ENCODE measurements at regions of chr1 and their contacts with region 1.

Region 1: DNA sequence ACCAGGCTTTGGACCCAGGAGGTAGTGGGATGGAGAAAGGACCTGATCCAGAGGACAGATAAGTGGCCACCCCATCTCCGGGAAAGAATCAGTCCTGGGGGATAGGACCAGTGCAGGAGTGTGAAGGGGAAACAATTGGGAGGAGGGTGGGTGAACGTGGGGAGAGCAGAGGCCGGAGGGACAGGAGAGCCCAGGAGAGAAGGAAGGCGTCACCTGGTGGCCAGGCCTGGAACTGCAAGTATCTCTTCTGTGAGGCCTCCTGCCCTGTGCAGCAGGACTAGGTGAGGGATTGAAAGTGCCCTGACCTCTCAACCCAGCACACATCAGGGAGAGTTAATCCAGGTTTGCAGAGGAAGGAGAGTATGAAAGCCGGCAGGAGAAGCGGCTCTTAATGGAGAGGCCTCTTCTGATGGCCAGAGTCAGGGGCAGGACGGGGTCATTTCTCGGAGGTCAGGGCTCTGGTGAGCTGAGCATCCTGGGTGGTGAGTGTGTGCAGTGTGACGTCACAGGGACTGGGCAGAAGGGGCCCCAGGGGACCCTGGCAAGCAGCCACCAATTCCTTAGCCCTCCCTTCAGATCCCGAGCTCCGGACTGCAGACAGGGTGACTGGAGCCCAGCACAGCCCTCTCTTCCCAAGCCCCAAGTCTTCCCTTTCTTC is 9.2 kb upstream of the LAD1 start:
- DNase-seq: peak; percentile 80 to 98
- H3K4me3 ChIP-seq: no peak overlapping the region
- H3K27ac ChIP-seq: no peak overlapping the region
- H3K4me1 ChIP-seq: peaks cover 0 to 5% (median 0%) of the 10 kb centered on the region in 4 experiments; a peak in 2 of 7 replicates
- H3K27me3 ChIP-seq: no peaks in the 10 kb centered on the region; a peak in 1 of 7 replicates
- CTCF ChIP-seq: peak; percentile 91 to 99 (median 99)
- EP300 ChIP-seq: no peak
- POLR2A ChIP-seq: no peak
- RAD21 ChIP-seq: peak; percentile 81 to 82

Region 2: DNA sequence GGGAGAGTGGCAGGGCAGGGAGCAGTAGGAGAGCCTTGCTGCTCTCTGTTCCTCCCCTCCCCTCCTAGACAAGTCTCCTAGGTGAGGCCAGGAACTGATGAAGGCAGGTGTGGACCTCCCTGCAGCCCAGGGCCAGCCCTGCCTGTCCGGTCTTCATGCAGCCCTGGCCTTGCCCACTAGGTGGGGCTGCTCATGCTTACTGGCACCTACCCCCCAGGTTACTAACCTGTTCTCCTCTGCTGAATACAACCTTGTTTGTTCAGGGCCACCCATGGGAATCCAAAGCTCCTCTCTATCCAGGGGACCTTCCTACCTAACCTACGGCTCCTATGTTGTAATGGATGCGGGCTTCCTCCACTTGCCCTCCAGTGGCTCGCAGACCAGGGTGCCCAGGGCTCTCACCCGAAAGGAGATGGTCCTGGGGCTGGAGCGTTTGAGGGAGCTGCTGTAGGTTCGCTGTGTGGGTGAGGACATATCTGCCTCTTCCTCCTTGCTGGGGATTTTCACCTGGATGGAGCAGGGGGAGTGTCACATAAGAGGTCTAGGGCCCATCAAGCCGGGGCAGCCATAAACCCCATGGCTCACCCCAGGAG is 22.9 kb before region 1 on chr1:
- CTCF ChIA-PET with region 1: interaction called, 371 read pairs
- POLR2A ChIA-PET with region 1: interaction called, 4 read pairs
- DNase-seq: peak; percentile 38 to 95
- H3K4me3 ChIP-seq: no peak overlapping the region
- H3K27ac ChIP-seq: no peak overlapping the region
- H3K4me1 ChIP-seq: peaks cover 0 to 2% (median 0%) of the 10 kb centered on the region in 4 experiments; a peak in 1 of 7 replicates
- H3K27me3 ChIP-seq: no peaks in the 10 kb centered on the region
- CTCF ChIP-seq: peak; percentile 92 to 99 (median 98)
- EP300 ChIP-seq: no peak
- POLR2A ChIP-seq: no peak
- RAD21 ChIP-seq: peak; percentile 74 to 84

Region 3: DNA sequence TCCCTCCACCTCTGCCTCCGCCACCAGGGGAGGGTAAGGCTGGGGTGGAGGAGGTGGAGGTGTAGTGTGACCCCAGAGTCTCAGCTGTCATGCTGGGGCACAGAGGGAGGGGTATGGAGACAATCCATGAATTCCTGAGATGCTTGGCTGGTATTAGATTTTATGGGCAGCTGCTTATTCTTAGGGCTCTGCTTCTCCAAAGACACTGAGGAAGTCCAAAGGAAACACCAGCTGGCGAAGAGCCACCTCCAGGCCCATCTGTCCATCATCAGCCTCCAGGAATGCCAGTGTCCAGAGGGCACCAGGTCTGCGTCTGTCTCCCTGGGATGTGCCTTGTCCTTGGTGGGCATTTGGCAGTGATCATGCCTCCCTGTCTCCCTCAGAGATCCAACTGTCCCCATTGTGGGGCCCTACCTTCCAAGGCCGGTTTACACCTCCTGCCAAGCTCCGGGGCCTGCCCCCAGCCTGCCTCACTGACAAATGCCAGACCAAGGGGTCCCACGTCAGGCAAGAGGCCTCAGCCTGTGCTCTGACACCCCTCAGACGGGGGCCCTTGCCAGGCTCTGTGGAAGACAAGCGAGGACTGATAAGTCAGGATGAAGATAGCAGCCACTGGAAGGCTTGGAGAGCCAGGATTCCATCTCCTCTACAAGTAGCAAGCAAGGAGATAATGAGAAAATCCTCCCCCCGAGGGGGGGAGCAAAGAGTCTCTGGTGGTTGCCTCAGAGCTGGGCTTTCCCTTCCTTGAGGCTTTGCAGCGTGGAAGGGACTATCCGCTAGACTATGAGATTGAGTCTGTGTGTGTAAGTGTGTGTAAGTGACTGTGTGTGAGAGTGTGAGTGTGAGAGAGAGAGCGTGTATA is 11.7 kb after region 1 on chr1:
- CTCF ChIA-PET with region 1: interaction called, 60 read pairs
- POLR2A ChIA-PET with region 1: interaction called, 8 read pairs
- DNase-seq: no peak
- H3K4me3 ChIP-seq: no peak overlapping the region
- H3K27ac ChIP-seq: no peak overlapping the region
- H3K4me1 ChIP-seq: peaks cover 0 to 10% (median 0%) of the 10 kb centered on the region in 4 experiments; a peak in 1 of 7 replicates
- H3K27me3 ChIP-seq: 0 out of 7 replicates have a peak, but pooled peaks cover 0 to 2% (median 0%) of the 10 kb centered on the region in 4 experiments
- CTCF ChIP-seq: no peak
- EP300 ChIP-seq: no peak
- POLR2A ChIP-seq: no peak
- RAD21 ChIP-seq: no peak

Region 4: GRCh38 chr1:201426479-201427310 is 18.4 kb after region 1 on chr1:
- CTCF ChIA-PET with region 1: interaction called, 60 read pairs
- POLR2A ChIA-PET with region 1: interaction called, 8 read pairs
- DNase-seq: no peak
- H3K4me3 ChIP-seq: no peak overlapping the region
- H3K27ac ChIP-seq: no peak overlapping the region
- H3K4me1 ChIP-seq: peaks cover 0 to 2% (median 0%) of the 10 kb centered on the region in 4 experiments; a peak in 1 of 7 replicates
- H3K27me3 ChIP-seq: no peaks in the 10 kb centered on the region
- CTCF ChIP-seq: no peak
- EP300 ChIP-seq: no peak
- POLR2A ChIP-seq: no peak
- RAD21 ChIP-seq: no peak